ENCODE measurements at regions of chr19 and their contacts with region 1.

Region 1: DNA sequence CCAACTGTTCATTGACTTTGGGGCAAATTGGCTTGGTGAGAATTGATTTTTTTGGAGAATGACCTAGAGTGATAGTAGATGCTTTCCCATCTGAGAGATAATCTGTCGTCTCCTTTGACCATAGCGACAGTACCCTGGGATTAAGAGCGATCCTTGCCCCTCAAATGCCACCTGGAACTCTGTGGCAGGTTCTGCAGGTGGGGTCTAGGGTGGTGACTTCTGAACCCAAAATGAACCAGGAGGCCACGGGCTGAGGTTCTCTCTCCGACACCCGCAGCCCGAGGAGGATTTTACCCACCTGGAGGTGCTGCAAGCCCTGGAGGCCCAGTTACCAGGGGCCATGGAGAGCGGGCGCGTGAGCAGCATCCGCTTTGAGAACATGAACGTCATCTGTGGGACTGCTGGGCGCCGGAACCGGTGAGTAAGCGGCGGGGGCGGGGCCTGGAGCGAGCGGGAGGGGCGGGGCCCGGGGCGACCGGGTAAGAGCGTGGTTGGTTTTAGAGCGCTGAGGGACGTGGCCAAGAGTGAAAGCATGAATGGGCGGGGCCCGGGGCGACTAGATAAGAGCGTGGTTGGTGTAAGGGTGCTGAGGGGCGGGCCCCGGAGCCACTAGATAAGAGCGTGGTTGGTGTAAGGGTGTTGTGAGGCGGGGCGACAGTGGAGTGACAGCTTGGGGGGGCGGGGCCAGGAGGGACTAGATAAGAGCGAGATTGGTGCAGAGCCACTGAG is 8.6 kb downstream of the C19orf81 start:
- DNase-seq: peak; percentile 69
- H3K4me3 Mint-ChIP-seq: peak overlapping the region; percentile 78
- H3K27ac Mint-ChIP-seq: peak overlapping the region; percentile 87
- H3K4me1 Mint-ChIP-seq: peaks cover 15% of the 10 kb centered on the region
- H3K27me3 Mint-ChIP-seq: peaks cover 24% of the 10 kb centered on the region

Region 2: GRCh38 chr19:50476224-50476942 is 181.5 kb before region 1 on chr19 and contains the starts of genes EMC10 and GARIN5A:
- intact Hi-C with region 1: loop called (anchors 1 kb)
- DNase-seq: peak; percentile 92
- H3K4me3 Mint-ChIP-seq: peak within 1 kb of the TSS; percentile 91
- H3K27ac Mint-ChIP-seq: peak within 1 kb of the TSS; percentile 72
- H3K4me1 Mint-ChIP-seq: peaks cover 20% of the 10 kb centered on the region
- H3K27me3 Mint-ChIP-seq: no peaks in the 10 kb centered on the region
- total RNA-seq, gene EMC10: 90.0 and 95.4 TPM in 2 replicates
- total RNA-seq, gene GARIN5A: 0.39 and 0.88 TPM in 2 replicates

Region 3: DNA sequence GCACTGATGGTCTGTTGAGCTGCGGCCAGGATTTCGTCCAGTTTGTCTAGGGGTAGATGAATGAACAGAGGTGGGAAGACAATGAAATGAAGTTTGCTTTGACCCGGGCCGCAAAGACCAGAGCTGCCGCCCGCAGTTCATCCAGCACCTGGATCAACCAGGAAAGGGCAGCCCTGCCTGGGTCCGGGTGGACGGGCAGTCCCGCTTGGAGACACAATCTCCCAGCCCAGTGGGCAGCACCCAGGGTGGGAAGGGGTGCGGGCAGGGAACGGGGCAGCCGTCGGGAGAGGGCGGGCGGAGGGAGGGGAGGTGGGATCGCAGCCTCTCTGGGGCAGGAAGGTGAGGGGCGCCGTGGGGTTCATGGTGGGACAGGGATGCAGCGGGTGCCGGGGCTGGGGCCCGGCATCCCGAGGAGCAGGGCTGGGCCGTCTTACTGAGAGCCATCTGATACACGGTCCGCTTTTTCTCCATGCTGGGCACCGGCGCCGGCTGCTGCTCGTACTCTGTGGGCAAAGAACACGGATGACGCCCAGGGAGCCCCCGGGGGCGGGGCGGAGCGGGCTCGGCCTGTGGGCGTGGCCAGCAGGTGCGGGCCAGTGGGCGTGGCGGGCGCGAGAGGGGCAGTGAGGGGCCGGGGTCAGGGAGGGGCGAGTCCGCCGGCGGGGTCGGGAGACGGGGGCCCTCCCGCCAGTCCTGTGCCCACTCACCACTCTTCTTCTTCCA is 28.6 kb after region 1 on chr19:
- intact Hi-C with region 1: no loop called
- DNase-seq: no peak
- H3K4me3 Mint-ChIP-seq: no peak overlapping the region
- H3K27ac Mint-ChIP-seq: no peak overlapping the region
- H3K4me1 Mint-ChIP-seq: no peaks in the 10 kb centered on the region
- H3K27me3 Mint-ChIP-seq: peaks cover 8% of the 10 kb centered on the region

Region 4: DNA sequence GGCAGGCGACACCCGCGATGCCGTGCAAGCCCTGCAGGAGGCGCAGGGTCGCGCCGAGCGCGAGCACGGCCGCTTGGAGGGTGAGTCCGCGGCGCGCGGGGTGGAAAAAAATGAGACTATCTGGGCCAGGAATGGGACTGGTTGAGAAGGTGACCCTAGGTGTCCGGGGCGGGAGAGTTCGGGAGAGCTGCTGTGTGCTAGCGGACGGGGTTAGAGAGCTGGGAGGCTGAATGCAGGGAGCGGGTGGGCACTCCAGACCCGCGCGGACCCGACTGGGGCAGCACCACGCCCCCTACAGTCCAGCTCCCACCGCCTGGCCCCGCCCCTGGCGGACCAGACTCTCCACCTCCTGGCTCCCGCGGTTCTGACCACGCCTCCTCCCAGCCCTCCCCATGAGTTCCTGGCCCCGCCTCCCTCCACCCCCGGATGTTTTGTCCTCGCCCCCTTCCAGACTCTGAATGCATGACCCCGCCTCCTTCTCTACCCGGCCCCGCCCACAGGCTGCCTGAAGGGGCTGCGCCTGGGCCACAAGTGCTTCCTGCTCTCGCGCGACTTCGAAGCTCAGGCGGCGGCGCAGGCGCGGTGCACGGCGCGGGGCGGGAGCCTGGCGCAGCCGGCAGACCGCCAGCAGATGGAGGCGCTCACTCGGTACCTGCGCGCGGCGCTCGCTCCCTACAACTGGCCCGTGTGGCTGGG is 66.8 kb after region 1 on chr19:
- intact Hi-C with region 1: loop called (anchors 1 kb)
- DNase-seq: peak; percentile 97
- H3K4me3 Mint-ChIP-seq: peak overlapping the region; percentile 85
- H3K27ac Mint-ChIP-seq: peak overlapping the region; percentile 78
- H3K4me1 Mint-ChIP-seq: no peaks in the 10 kb centered on the region
- H3K27me3 Mint-ChIP-seq: peaks cover 38% of the 10 kb centered on the region